GM12878 (cell line): ENCODE measurements at regions of chr9 and their contacts with region 1.

Region 1: DNA sequence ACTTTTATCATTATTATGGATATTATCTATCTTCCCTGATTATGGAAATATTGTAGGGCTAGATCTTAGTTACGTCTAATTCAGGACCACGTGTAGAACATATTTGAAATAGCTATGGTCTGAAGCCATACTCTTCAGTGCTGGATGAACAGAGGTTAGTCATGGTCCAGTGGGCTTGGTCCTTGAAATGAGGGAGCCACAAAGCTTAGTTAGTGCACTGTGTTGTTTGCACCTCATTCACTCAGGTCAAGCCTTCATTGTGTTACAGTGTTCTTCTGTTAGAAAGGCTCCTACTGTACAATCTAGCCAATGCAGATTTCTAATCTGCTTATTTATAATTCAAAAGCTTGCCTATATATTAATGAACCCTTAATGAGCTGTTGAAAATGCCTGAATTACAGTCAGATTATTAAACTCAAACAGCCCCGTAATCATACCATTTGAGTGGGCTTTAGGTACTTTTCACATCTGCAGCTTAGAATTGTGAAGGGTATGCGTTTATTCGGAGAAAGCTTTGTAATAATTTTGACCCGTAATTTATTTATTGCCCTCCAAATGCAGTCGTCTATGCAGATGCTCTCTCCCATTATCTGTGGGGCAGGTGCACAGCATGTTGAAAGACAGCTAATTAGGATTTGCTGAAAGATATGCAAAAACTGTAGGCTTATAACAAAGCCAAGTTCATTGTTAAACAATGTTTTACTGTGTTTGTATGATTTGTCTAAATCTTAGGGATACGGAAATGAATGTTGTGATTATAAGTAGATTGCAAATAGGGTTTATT is 164.9 kb downstream of the PBX3 start:
- DNase-seq: no peak
- ATAC-seq: no peak
- H3K4me3 ChIP-seq: no peak overlapping the region
- H3K27ac ChIP-seq: no peak overlapping the region
- H3K4me1 ChIP-seq: no peaks in the 10 kb centered on the region
- H3K27me3 ChIP-seq: no peaks in the 10 kb centered on the region
- CTCF ChIP-seq: no peak
- EP300 ChIP-seq: no peak
- POLR2A ChIP-seq: no peak
- RAD21 ChIP-seq: no peak

Region 2: DNA sequence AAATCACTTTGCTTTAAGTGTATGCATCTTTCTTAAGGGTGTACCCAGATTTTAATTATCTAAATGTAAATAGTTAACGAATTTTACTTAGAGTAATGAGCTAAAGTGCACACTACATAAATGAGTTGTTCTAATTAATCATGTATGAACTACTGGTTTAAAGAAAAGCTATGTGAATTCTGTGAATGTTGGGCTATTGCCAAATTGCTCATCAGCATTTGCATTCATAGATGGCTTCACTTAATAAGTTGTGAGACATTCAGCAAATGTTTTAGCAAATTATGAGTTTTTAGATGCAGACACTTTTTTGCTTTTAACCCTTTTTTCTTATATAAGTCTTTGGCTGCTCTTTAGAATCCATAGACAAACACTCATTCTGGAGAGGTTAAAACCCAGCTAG is 10.8 kb after region 1 on chr9:
- CTCF ChIA-PET with region 1: interaction called, 9 read pairs
- POLR2A ChIA-PET with region 1: interaction called, 4 read pairs
- RAD21 ChIA-PET with region 1: no interaction called
- SMC1A ChIA-PET with region 1: interaction called, 16 read pairs
- in situ Hi-C with region 1: no loop called
- intact Hi-C with region 1: no loop called
- DNase-seq: no peak
- ATAC-seq: no peak
- H3K4me3 ChIP-seq: no peak overlapping the region
- H3K27ac ChIP-seq: no peak overlapping the region
- H3K4me1 ChIP-seq: no peaks in the 10 kb centered on the region
- H3K27me3 ChIP-seq: no peaks in the 10 kb centered on the region
- CTCF ChIP-seq: no peak
- EP300 ChIP-seq: no peak
- POLR2A ChIP-seq: no peak
- RAD21 ChIP-seq: no peak